Dorsolateral prefrontal cortex (tissue), 120 donors: ENCODE measurements at regions of chr11 and their contacts with region 1.

Region 1: DNA sequence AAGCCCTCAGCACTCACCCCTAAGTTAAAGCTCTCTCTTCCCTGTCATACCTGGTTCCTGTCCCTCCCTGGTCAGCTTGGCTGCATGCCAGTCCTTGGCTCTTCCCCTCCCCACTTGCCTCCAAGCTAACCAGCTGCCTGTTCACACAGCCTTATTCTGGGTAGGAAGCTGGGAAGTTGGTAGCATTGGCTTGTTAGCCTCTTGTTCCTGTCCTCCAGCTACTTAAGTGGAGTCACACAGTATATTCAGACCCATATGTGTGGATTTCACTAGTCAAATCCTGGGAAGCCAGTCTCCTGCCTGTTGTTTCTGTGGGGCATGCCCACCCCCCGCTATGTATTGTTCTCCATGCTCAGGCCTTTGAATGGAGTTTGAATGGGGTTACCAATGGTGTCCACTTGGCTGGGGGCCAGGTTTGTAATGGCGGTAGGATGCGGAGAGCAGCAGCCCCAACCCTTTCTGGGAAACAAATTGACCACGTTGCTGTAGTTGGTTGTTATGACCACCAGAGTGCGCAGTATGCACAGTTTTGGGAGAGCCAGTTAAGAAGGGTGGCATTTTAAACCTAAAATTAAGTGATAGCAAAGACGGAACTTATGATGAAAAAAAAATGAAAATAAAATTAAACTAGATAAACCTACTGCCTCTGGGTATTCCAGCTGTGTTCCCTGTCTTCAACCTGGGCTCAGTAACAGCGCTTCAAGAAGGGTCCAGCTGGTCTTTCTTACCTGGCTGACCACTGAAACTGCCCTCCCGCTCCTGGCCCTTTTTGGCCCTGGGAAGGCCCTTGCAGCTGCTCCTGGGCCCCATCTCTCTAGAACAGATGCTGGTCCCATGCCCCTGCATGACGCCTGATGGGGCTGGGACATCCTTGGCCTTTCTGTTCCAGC is 10.7 kb upstream of the RPS3 start:
- DNase-seq: peak in 9 of 10 donors; percentile 36 to 80 (median 63)
- H3K4me3 ChIP-seq: no peak overlapping the region
- H3K27ac ChIP-seq: no peak overlapping the region
- H3K27me3 ChIP-seq: no peaks in the 10 kb centered on the region
- CTCF ChIP-seq: peak; percentile 64 to 90 (median 83)

Region 2: GRCh38 chr11:75280227-75280701 is 108.4 kb before region 1 on chr11:
- intact Hi-C with region 1: loop called (anchors 1 kb)
- DNase-seq: peak; percentile 76 to 90 (median 86)
- H3K4me3 ChIP-seq: no peak overlapping the region
- H3K27ac ChIP-seq: peak overlapping the region in 57 of 59 donors; percentile 28 to 87 (median 76)
- H3K27me3 ChIP-seq: no peaks in the 10 kb centered on the region
- CTCF ChIP-seq: peak; percentile 97 to 100 (median 99)

Region 3: DNA sequence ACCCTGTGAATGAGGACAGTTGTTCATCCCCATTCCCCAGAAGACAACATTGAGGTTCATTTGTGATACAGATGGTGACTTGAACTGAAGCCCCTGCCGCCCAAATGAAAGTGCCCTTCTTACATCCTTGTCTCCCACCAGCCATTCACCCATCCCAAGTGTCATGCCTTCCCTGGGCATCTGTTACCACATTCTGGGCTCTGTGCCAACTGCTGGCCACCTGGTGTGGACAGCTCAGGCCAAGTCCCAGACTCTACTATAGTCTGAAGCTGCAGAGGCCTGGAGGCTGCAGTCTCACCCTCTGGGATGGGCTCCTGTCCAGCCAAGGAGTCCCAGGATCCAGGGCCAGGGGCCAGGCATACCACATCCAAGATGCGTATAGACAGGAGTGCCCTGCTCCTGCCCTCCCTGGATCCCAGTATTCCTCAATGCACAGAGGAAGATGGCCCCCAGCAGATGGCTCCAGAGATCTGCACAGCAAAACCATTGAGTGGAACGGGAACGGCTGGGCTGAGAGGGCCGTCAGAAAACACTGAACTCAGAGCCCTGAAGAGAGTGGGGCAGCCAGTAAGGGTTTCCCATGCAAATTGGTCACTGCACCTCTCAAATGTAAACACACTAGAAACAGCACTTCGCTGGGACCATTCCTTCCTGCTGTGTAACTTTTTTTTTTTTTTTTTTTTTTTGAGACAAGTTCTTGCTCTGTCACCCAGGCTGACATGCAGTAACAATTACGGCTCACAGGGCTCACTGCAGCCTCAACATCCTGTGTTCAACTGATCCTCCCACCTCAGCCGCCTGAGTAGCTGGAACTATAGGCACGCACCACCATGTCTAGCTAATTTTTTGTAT is 60.0 kb before region 1 on chr11:
- intact Hi-C with region 1: loop called (anchors 1 to 2 kb)
- DNase-seq: peak; percentile 65 to 89 (median 83)
- H3K4me3 ChIP-seq: peak overlapping the region in 1 of 59 donors; percentile 6
- H3K27ac ChIP-seq: peak overlapping the region; percentile 14 to 97 (median 74)
- H3K27me3 ChIP-seq: no peaks in the 10 kb centered on the region
- CTCF ChIP-seq: peak in 55 of 56 donors; percentile 49 to 91 (median 73)

Region 4: DNA sequence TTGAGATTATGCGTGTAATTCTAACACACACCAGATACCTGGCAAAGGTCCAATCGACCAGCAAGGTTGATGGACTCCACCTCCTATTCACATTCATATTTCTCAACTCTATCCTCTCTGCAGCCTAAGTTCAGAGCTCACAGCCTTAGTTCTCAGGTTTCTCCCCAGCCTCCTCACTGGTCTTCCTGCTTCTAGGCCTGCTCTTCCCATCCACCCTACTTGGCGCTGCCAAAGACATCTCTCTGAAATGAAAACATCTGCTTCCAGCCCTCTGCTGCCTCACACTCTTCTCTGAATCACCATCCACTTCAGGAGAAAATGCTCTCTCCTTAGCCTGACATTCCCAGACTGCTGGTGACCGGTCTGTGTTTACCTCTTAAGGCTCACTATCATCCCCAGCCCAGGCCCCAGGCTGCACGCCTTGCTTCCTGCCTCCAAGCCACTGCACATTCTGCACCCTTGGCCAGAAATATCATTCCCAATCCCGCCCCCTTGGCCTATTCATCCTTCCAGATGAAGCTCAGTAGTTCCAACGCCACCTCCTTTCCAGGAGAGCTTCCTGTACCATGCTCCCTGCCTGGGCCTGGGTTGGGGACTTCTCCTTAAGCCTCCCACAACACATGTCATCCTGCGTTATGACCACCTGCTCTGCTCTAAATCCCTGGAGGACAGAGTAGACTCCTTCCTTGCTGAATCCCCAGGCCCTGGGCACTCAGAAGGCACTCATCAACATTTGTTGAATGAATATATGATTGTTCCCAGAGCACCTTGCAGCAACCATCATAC is 40.7 kb before region 1 on chr11:
- intact Hi-C with region 1: loop called in 1 of 2 experiments (anchors 5 kb)
- DNase-seq: peak in 2 of 10 donors; percentile 32 to 56
- H3K4me3 ChIP-seq: peak overlapping the region in 11 of 59 donors; percentile 0 to 78 (median 14)
- H3K27ac ChIP-seq: peak overlapping the region in 58 of 59 donors; percentile 8 to 96 (median 89)
- H3K27me3 ChIP-seq: no peaks in the 10 kb centered on the region
- CTCF ChIP-seq: no peak

Region 5: DNA sequence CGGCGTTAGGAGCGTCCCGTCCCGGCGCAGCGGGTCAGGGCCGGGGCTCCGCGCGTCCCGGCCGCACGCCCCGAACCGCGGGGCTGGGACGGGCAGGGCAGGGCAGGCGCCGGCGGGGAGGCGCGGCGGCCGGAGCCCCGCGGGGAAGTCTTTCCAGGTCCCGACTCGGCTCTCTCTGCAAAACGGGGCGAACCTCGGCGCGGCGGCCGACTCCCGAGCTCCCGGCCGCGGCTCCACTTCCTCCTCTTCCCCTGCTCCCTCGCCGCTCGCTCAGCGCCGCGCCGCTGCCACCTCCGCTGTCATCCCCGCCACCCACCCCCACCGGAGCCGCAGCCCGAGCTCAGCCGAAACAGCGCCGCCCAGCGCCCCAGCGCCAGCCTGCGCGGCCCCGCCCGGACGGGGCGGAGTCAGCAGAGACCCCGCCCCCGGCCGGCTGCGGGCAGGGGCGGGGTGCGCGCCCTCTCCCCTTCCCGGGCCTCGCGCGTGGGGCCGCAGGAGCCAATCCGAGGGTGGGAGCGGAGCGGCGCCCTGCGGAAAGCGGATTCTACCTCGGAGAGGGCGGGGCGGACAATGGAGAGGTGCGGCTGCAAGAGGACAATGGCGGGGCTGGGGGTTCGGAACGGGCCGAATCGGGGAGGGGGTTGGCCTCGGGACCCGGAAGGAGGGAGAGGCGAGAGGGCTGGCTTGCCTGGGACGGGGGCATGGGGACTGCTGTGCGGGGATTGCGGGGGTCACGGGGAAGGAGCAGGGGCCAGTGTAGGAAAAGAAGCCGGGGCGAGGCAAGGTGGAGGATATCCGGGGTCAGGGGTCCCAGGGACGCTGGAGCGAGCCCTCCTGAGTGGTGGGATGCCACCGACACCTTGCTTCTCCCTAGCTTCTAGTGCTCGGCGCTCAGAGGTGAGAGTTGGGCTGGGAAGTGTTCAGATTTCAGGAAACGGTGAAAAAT is 137.2 kb after region 1 on chr11 and contains the start of gene GDPD5:
- intact Hi-C with region 1: loop called in 1 of 2 experiments (anchors 5 kb)
- DNase-seq: peak; percentile 49 to 91 (median 74)
- H3K4me3 ChIP-seq: peak within 1 kb of the TSS; percentile 57 to 88 (median 74)
- H3K27ac ChIP-seq: peak within 1 kb of the TSS in 6 of 59 donors; percentile 43 to 79 (median 66)
- H3K27me3 ChIP-seq: no peaks in the 10 kb centered on the region
- CTCF ChIP-seq: peak in 50 of 56 donors; percentile 14 to 79 (median 56)
- total RNA-seq, gene GDPD5: 15.7 to 42.6 (median 27.3) TPM

Region 6: GRCh38 chr11:75532200-75533048 is 143.8 kb after region 1 on chr11:
- intact Hi-C with region 1: loop called (anchors 2 to 5 kb)
- DNase-seq: peak in 8 of 10 donors; percentile 54 to 83 (median 76)
- H3K4me3 ChIP-seq: no peak overlapping the region
- H3K27ac ChIP-seq: no peak overlapping the region
- H3K27me3 ChIP-seq: no peaks in the 10 kb centered on the region
- CTCF ChIP-seq: peak; percentile 88 to 100 (median 96)

Region 7: GRCh38 chr11:77073328-77074001 is 1684.8 kb after region 1 on chr11:
- intact Hi-C with region 1: no loop called
- DNase-seq: peak in 8 of 10 donors; percentile 41 to 74 (median 66)
- H3K4me3 ChIP-seq: no peak overlapping the region
- H3K27ac ChIP-seq: peak overlapping the region in 56 of 59 donors; percentile 3 to 85 (median 70)
- H3K27me3 ChIP-seq: no peaks in the 10 kb centered on the region
- CTCF ChIP-seq: peak in 30 of 56 donors; percentile 7 to 48 (median 28)